ENCODE measurements at regions of chr17 and their contacts with region 1.

Region 1: GRCh38 chr17:48084932-48085444 is 16.3 kb downstream of the CBX1 start:
- DNase-seq: no peak
- ATAC-seq: no peak
- H3K4me3 ChIP-seq: no peak overlapping the region
- H3K27ac ChIP-seq: no peak overlapping the region
- H3K4me1 ChIP-seq: no peaks in the 10 kb centered on the region
- H3K27me3 ChIP-seq: no peaks in the 10 kb centered on the region
- CTCF ChIP-seq: no peak
- EP300 ChIP-seq: no peak
- POLR2A ChIP-seq: no peak
- RAD21 ChIP-seq: no peak

Region 2: GRCh38 chr17:48054238-48055185 is 30.5 kb before region 1 on chr17:
- CTCF ChIA-PET with region 1: interaction called, 43 read pairs
- POLR2A ChIA-PET with region 1: no interaction called
- RAD21 ChIA-PET with region 1: interaction called, 5 read pairs
- SMC1A ChIA-PET with region 1: interaction called, 12 read pairs
- in situ Hi-C with region 1: no loop called
- intact Hi-C with region 1: no loop called
- DNase-seq: no peak
- ATAC-seq: peak; percentile 7
- H3K4me3 ChIP-seq: peak overlapping the region; percentile 64; the same call in 1 of the 2 replicates
- H3K27ac ChIP-seq: peak overlapping the region; percentile 68
- H3K4me1 ChIP-seq: peaks cover 29% of the 10 kb centered on the region
- H3K27me3 ChIP-seq: no peaks in the 10 kb centered on the region
- CTCF ChIP-seq: no peak
- EP300 ChIP-seq: no peak
- POLR2A ChIP-seq: no peak; the same call in 1 of the 2 replicates
- RAD21 ChIP-seq: no peak

Region 3: GRCh38 chr17:48101012-48101720 is 16.2 kb after region 1 on chr17 and contains the start of gene CBX1:
- CTCF ChIA-PET with region 1: interaction called, 525 read pairs
- POLR2A ChIA-PET with region 1: interaction called, 3 read pairs
- RAD21 ChIA-PET with region 1: interaction called, 30 read pairs
- SMC1A ChIA-PET with region 1: interaction called, 17 read pairs
- in situ Hi-C with region 1: no loop called
- intact Hi-C with region 1: no loop called
- DNase-seq: peak; percentile 89
- ATAC-seq: peak; percentile 98
- H3K4me3 ChIP-seq: peak within 1 kb of the TSS; percentile 87
- H3K27ac ChIP-seq: peak within 1 kb of the TSS; percentile 80
- H3K4me1 ChIP-seq: peaks cover 23% of the 10 kb centered on the region
- H3K27me3 ChIP-seq: no peaks in the 10 kb centered on the region
- CTCF ChIP-seq: no peak
- EP300 ChIP-seq: no peak
- POLR2A ChIP-seq: peak; percentile 74
- RAD21 ChIP-seq: no peak
- polyA plus RNA-seq, gene CBX1: 11.8 to 20.3 TPM

Region 4: DNA sequence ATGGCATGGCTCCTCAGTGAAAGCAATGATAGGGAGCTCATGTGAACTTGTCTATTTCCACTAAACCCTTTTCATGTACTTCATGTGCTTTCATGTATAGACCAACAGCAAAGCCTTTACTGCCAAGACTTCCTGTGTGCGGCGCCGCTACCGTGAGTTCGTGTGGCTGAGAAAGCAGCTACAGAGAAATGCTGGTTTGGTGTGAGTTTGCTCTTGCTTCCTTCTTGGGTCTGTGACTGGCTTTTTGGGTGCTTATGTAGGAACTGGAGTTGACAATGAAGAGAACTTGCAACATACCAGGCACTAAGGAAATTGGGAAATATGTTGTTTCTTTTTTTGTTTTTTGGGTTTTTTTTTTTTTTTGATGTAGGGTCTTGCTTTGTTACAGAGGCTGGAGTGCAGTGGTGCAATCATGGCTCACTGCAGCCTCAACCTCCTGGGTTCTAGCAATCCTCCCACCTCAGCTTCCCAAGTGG is 28.3 kb after region 1 on chr17:
- CTCF ChIA-PET with region 1: interaction called, 525 read pairs
- POLR2A ChIA-PET with region 1: interaction called, 10 read pairs
- RAD21 ChIA-PET with region 1: interaction called, 18 read pairs
- SMC1A ChIA-PET with region 1: interaction called, 38 read pairs
- in situ Hi-C with region 1: no loop called
- intact Hi-C with region 1: no loop called
- DNase-seq: peak; percentile 71
- ATAC-seq: peak; percentile 55
- H3K4me3 ChIP-seq: peak overlapping the region; percentile 97
- H3K27ac ChIP-seq: peak overlapping the region; percentile 93
- H3K4me1 ChIP-seq: no peaks in the 10 kb centered on the region; the same call in none of the 2 replicates
- H3K27me3 ChIP-seq: no peaks in the 10 kb centered on the region
- CTCF ChIP-seq: no peak
- EP300 ChIP-seq: no peak
- POLR2A ChIP-seq: peak; percentile 55; the same call in 1 of the 2 replicates
- RAD21 ChIP-seq: no peak

Region 5: GRCh38 chr17:48131216-48131824 is 46.3 kb after region 1 on chr17:
- CTCF ChIA-PET with region 1: interaction called, 525 read pairs
- POLR2A ChIA-PET with region 1: no interaction called
- RAD21 ChIA-PET with region 1: interaction called, 92 read pairs
- SMC1A ChIA-PET with region 1: interaction called, 205 read pairs
- in situ Hi-C with region 1: no loop called
- intact Hi-C with region 1: loop called (anchors 1 kb)
- DNase-seq: no peak
- ATAC-seq: peak; percentile 91
- H3K4me3 ChIP-seq: no peak overlapping the region
- H3K27ac ChIP-seq: no peak overlapping the region
- H3K4me1 ChIP-seq: no peaks in the 10 kb centered on the region
- H3K27me3 ChIP-seq: no peaks in the 10 kb centered on the region
- CTCF ChIP-seq: peak; percentile 76 to 88 (median 80)
- EP300 ChIP-seq: no peak
- POLR2A ChIP-seq: no peak
- RAD21 ChIP-seq: peak; percentile 91

Region 6: DNA sequence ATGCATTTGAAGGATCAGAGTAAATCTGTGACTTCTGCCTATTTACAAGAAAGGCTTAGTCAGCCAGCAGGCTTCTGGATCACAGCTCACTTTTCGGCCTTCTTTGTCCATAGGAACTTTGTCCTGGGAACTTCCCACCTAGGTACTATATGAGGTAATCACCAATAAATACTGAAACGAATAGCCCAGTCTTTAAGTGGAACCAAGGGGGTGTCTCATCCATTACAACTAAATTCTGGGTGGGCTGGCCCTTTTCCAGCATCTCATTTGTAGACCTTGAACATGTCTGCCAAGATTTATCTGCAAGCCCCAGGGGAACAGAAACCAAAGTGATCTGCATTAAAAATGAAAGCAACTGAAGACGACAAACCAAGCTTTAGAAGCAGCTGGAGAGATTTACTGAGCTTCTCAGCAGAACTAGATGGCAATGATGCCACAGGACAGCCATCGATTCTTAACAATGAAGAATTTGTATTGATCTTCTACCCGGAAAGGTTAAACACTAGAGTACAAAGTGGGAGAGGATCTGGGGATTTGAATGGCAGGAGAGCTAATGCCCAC is 78.0 kb after region 1 on chr17:
- CTCF ChIA-PET with region 1: interaction called, 14 read pairs
- POLR2A ChIA-PET with region 1: no interaction called
- RAD21 ChIA-PET with region 1: interaction called, 4 read pairs
- SMC1A ChIA-PET with region 1: interaction called, 3 read pairs
- in situ Hi-C with region 1: no loop called
- intact Hi-C with region 1: no loop called
- DNase-seq: no peak
- ATAC-seq: peak; percentile 61
- H3K4me3 ChIP-seq: no peak overlapping the region
- H3K27ac ChIP-seq: peak overlapping the region; percentile 45
- H3K4me1 ChIP-seq: peaks cover 6% of the 10 kb centered on the region; the same call in 1 of the 2 replicates
- H3K27me3 ChIP-seq: no peaks in the 10 kb centered on the region
- CTCF ChIP-seq: no peak
- EP300 ChIP-seq: no peak
- POLR2A ChIP-seq: no peak
- RAD21 ChIP-seq: no peak

Region 7: GRCh38 chr17:48307814-48308411 is 222.9 kb after region 1 on chr17:
- CTCF ChIA-PET with region 1: no interaction called
- POLR2A ChIA-PET with region 1: no interaction called
- RAD21 ChIA-PET with region 1: no interaction called
- SMC1A ChIA-PET with region 1: no interaction called
- in situ Hi-C with region 1: no loop called
- intact Hi-C with region 1: no loop called
- DNase-seq: no peak
- ATAC-seq: peak; percentile 98
- H3K4me3 ChIP-seq: no peak overlapping the region
- H3K27ac ChIP-seq: no peak overlapping the region
- H3K4me1 ChIP-seq: peaks cover 8% of the 10 kb centered on the region; the same call in 1 of the 2 replicates
- H3K27me3 ChIP-seq: no peaks in the 10 kb centered on the region
- CTCF ChIP-seq: peak; percentile 69 to 89 (median 86)
- EP300 ChIP-seq: no peak
- POLR2A ChIP-seq: no peak
- RAD21 ChIP-seq: peak; percentile 66

Region 8: GRCh38 chr17:48441231-48441711 is 356.3 kb after region 1 on chr17:
- CTCF ChIA-PET with region 1: no interaction called
- POLR2A ChIA-PET with region 1: no interaction called
- RAD21 ChIA-PET with region 1: no interaction called
- SMC1A ChIA-PET with region 1: no interaction called
- in situ Hi-C with region 1: no loop called
- intact Hi-C with region 1: no loop called
- DNase-seq: peak; percentile 96
- ATAC-seq: peak; percentile 86
- H3K4me3 ChIP-seq: peak overlapping the region; percentile 25; the same call in 1 of the 2 replicates
- H3K27ac ChIP-seq: peak overlapping the region; percentile 94
- H3K4me1 ChIP-seq: peaks cover 64% of the 10 kb centered on the region
- H3K27me3 ChIP-seq: no peaks in the 10 kb centered on the region
- CTCF ChIP-seq: no peak
- EP300 ChIP-seq: peak; percentile 85 to 91
- POLR2A ChIP-seq: no peak; the same call in 1 of the 2 replicates
- RAD21 ChIP-seq: 0 out of 2 replicates have a peak, but pooled peaks have one; percentile 1